Naive thymus-derived CD4-positive, alpha-beta T cell (primary cell): ENCODE measurements at regions of chr1 and their contacts with region 1.

Region 1: DNA sequence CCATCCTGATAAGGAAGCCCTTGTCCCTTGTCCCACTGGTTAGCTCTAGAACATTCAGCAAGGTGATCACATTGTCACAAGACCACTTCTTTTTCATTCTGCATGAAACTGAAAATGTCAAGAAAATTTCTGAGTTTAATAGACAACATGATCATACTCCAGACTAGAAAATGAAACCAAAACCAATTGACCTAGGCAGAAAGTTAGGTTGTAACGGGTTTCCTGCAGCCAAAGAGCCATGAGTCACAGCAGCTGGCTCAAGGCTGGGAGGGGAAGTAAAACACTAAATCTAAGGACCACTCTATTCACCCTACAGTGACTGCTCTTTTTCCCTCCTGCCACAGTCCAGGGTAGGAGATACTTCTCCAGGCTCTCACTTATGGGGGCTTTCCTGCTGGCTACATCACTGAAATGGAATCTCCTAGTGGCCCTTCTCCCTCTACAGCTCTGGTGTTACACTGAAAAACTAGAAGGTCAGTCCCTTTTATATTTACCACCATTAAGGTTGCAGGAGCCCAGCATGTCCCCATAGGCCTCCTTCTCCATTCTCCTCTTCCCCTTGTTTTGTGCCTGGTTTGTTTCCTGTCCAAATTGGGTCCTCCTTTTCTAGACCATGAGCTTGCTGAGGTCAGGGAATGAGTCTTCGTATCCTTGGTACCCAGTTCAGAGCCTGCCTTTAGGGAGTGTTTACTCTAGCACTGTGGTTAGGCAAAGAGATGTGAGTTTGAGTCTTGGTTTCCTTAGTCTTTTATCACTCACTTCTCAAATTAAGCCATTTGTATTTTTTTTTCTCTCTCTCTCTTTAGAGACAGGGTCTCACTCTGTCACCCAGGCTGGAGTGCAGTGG is 236.5 kb upstream of the JUN start:
- DNase-seq: peak; percentile 7 to 58 (median 43)
- ATAC-seq: peak; percentile 88
- H3K4me3 ChIP-seq: peak overlapping the region; percentile 38
- H3K4me3 Mint-ChIP-seq: peak overlapping the region; percentile 80 to 90 (median 84)
- H3K27ac ChIP-seq: peak overlapping the region; percentile 57
- H3K27ac Mint-ChIP-seq: peak overlapping the region; percentile 88 to 99 (median 94)
- H3K4me1 ChIP-seq: peaks cover 11 to 15% of the 10 kb centered on the region in 2 donors
- H3K4me1 Mint-ChIP-seq: peaks cover 16 to 56% (median 25%) of the 10 kb centered on the region in 7 donors
- H3K27me3 ChIP-seq: no peaks in the 10 kb centered on the region
- H3K27me3 Mint-ChIP-seq: no peaks in the 10 kb centered on the region

Region 2: GRCh38 chr1:58857680-58858673 is 162.4 kb before region 1 on chr1:
- CTCF ChIA-PET with region 1: no interaction called
- POLR2A ChIA-PET with region 1: no interaction called
- intact Hi-C with region 1: loop called in 1 of 2 experiments (anchors 2 kb)
- DNase-seq: peak in 7 of 9 donors; percentile 28 to 61 (median 52)
- ATAC-seq: peak; percentile 76
- H3K4me3 ChIP-seq: no peak overlapping the region
- H3K4me3 Mint-ChIP-seq: peak overlapping the region in 9 of 10 donors; percentile 32 to 83 (median 51)
- H3K27ac ChIP-seq: peak overlapping the region; percentile 65
- H3K27ac Mint-ChIP-seq: peak overlapping the region; percentile 83 to 97 (median 92)
- H3K4me1 ChIP-seq: peaks cover 16 to 34% of the 10 kb centered on the region in 2 donors
- H3K4me1 Mint-ChIP-seq: peaks cover 34 to 64% (median 59%) of the 10 kb centered on the region in 7 donors
- H3K27me3 ChIP-seq: no peaks in the 10 kb centered on the region
- H3K27me3 Mint-ChIP-seq: no peaks in the 10 kb centered on the region

Region 3: GRCh38 chr1:58941471-58942289 is 78.7 kb before region 1 on chr1:
- CTCF ChIA-PET with region 1: no interaction called
- POLR2A ChIA-PET with region 1: no interaction called
- intact Hi-C with region 1: loop called in 1 of 2 experiments (anchors 1 kb)
- DNase-seq: peak in 6 of 9 donors; percentile 33 to 65 (median 57)
- ATAC-seq: peak; percentile 83
- H3K4me3 ChIP-seq: peak overlapping the region; percentile 40
- H3K4me3 Mint-ChIP-seq: peak overlapping the region; percentile 60 to 88 (median 80)
- H3K27ac ChIP-seq: peak overlapping the region; percentile 39
- H3K27ac Mint-ChIP-seq: peak overlapping the region; percentile 37 to 89 (median 77)
- H3K4me1 ChIP-seq: peaks cover 48 to 61% of the 10 kb centered on the region in 2 donors
- H3K4me1 Mint-ChIP-seq: peaks cover 60 to 87% (median 74%) of the 10 kb centered on the region in 7 donors
- H3K27me3 ChIP-seq: no peaks in the 10 kb centered on the region
- H3K27me3 Mint-ChIP-seq: no peaks in the 10 kb centered on the region

Region 4: DNA sequence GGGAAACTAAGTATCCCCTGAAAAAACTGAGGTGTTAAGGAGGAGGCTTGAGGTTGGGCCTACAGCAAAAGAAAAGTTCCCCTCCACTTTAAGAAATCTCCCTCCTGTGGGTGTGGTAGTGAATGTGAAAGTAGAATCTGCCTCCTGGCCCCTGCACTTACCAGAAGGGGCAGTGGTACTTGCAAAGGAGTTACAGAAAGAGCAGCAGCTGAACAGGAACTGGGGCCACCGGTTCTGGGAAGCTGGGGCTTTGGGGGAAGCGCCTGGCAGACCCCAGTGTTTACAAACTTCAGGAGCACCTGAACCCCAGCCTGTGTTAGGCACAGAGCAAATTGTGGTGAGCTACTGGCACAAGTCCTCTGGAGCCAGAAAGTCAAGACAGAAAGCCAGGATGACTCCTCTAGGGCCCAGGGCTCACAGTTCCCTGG is 26.4 kb after region 1 on chr1:
- CTCF ChIA-PET with region 1: no interaction called
- POLR2A ChIA-PET with region 1: interaction called, 3 read pairs
- intact Hi-C with region 1: loop called in 1 of 2 experiments (anchors 1 kb)
- DNase-seq: peak in 7 of 9 donors; percentile 18 to 49 (median 34)
- ATAC-seq: peak; percentile 84
- H3K4me3 ChIP-seq: no peak overlapping the region
- H3K4me3 Mint-ChIP-seq: peak overlapping the region in 8 of 10 donors; percentile 14 to 82 (median 34)
- H3K27ac ChIP-seq: no peak overlapping the region
- H3K27ac Mint-ChIP-seq: peak overlapping the region; percentile 64 to 96 (median 77)
- H3K4me1 ChIP-seq: peaks cover 30% of the 10 kb centered on the region in 2 donors
- H3K4me1 Mint-ChIP-seq: peaks cover 26 to 65% (median 41%) of the 10 kb centered on the region in 7 donors
- H3K27me3 ChIP-seq: no peaks in the 10 kb centered on the region
- H3K27me3 Mint-ChIP-seq: no peaks in the 10 kb centered on the region

Region 5: DNA sequence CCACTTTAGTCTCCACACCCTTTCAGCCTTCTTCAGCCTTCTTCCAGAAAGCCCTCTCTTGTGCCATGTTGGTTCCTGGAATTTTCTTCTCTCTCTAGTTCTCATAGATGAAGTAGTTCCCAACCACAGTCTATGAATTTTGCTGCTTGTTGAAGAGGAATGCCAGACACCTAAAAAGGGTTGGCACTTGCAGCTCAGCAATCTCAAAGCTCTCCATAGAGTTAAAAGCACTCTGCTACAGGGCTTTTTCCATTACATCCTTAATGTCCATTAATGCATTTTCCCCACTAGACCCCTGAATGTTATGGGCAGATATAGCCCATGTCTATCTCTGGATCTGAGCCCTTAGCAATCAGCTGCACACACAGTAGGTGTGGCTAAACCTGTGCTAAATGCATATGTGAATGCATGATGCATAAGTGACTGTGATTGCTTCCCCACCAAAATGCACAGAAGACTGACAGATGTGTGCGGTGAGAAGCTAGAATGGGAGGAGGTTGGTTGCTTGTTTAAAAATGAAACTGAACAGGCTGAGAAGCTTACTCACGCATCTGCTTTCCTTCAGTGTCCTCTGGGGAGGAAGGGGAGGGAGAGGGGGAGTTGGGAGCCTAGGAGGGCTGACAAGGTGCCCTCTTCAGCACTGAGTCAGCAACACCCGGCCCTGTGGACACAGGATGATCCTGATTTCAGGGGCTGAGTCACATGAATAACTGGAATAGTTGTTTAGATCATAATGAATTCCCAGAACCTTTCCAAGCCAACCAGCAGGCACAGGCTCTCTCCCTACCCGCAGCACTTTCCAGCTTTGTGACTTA is 130.4 kb after region 1 on chr1:
- CTCF ChIA-PET with region 1: no interaction called
- POLR2A ChIA-PET with region 1: no interaction called
- intact Hi-C with region 1: loop called in 1 of 2 experiments (anchors 10 kb)
- DNase-seq: peak in 1 of 9 donors; percentile 32
- ATAC-seq: no peak
- H3K4me3 ChIP-seq: no peak overlapping the region
- H3K4me3 Mint-ChIP-seq: peak overlapping the region in 2 of 10 donors; percentile 5 to 66
- H3K27ac ChIP-seq: no peak overlapping the region
- H3K27ac Mint-ChIP-seq: peak overlapping the region in 1 of 9 donors; percentile 44
- H3K4me1 ChIP-seq: peaks cover 0 to 5% of the 10 kb centered on the region in 2 donors
- H3K4me1 Mint-ChIP-seq: peaks cover 0 to 45% (median 13%) of the 10 kb centered on the region in 7 donors
- H3K27me3 ChIP-seq: no peaks in the 10 kb centered on the region
- H3K27me3 Mint-ChIP-seq: peaks cover 0 to 9% (median 5%) of the 10 kb centered on the region in 5 donors